ENCODE measurements at regions of chr17 and their contacts with region 1.

Region 1: GRCh38 chr17:42067351-42068091 is 17.1 kb upstream of the C17orf113 start:
- DNase-seq: peak in 1 of 2 experiments; percentile 96
- H3K4me3 ChIP-seq: no peak overlapping the region
- H3K27ac ChIP-seq: no peak overlapping the region
- H3K4me1 ChIP-seq: peaks cover 0 to 12% (median 5%) of the 10 kb centered on the region in 4 experiments; a peak in 6 of 7 replicates
- H3K27me3 ChIP-seq: no peaks in the 10 kb centered on the region; a peak in 2 of 7 replicates
- CTCF ChIP-seq: peak; percentile 79 to 98 (median 84)
- EP300 ChIP-seq: no peak
- POLR2A ChIP-seq: no peak
- RAD21 ChIP-seq: peak; percentile 60 to 62

Region 2: GRCh38 chr17:41973436-41973835 is 94.1 kb before region 1 on chr17:
- CTCF ChIA-PET with region 1: no interaction called
- POLR2A ChIA-PET with region 1: no interaction called
- DNase-seq: no peak
- H3K4me3 ChIP-seq: no peak overlapping the region
- H3K27ac ChIP-seq: no peak overlapping the region
- H3K4me1 ChIP-seq: no peaks in the 10 kb centered on the region
- H3K27me3 ChIP-seq: no peaks in the 10 kb centered on the region
- CTCF ChIP-seq: no peak
- EP300 ChIP-seq: no peak
- POLR2A ChIP-seq: 0 out of 3 replicates have a peak, but pooled peaks of 1 of the 2 experiments have one; percentile 7
- RAD21 ChIP-seq: no peak

Region 3: GRCh38 chr17:42034059-42034458 is 33.5 kb before region 1 on chr17:
- CTCF ChIA-PET with region 1: interaction called, 93 read pairs
- POLR2A ChIA-PET with region 1: no interaction called
- DNase-seq: no peak
- H3K4me3 ChIP-seq: no peak overlapping the region
- H3K27ac ChIP-seq: no peak overlapping the region
- H3K4me1 ChIP-seq: peaks cover 0 to 6% (median 2%) of the 10 kb centered on the region in 4 experiments; a peak in 1 of 7 replicates
- H3K27me3 ChIP-seq: no peaks in the 10 kb centered on the region
- CTCF ChIP-seq: no peak
- EP300 ChIP-seq: no peak
- POLR2A ChIP-seq: no peak
- RAD21 ChIP-seq: no peak

Region 4: GRCh38 chr17:42050393-42051012 is 17.0 kb before region 1 on chr17 and contains the start of gene C17orf113:
- CTCF ChIA-PET with region 1: interaction called, 114 read pairs
- POLR2A ChIA-PET with region 1: interaction called, 5 read pairs
- DNase-seq: peak in 1 of 2 experiments; percentile 76
- H3K4me3 ChIP-seq: peak within 1 kb of the TSS; percentile 40 to 73 (median 62)
- H3K27ac ChIP-seq: no peak within 1 kb of the TSS
- H3K4me1 ChIP-seq: peaks cover 0 to 23% (median 12%) of the 10 kb centered on the region in 4 experiments; a peak in 6 of 7 replicates
- H3K27me3 ChIP-seq: peaks cover 0 to 4% (median 1%) of the 10 kb centered on the region in 4 experiments; a peak in 3 of 7 replicates
- CTCF ChIP-seq: peak; percentile 26 to 68 (median 64)
- EP300 ChIP-seq: no peak
- POLR2A ChIP-seq: no peak
- RAD21 ChIP-seq: peak; percentile 24 to 53
- total RNA-seq, gene C17orf113: 1.4 TPM in 2 replicates

Region 5: DNA sequence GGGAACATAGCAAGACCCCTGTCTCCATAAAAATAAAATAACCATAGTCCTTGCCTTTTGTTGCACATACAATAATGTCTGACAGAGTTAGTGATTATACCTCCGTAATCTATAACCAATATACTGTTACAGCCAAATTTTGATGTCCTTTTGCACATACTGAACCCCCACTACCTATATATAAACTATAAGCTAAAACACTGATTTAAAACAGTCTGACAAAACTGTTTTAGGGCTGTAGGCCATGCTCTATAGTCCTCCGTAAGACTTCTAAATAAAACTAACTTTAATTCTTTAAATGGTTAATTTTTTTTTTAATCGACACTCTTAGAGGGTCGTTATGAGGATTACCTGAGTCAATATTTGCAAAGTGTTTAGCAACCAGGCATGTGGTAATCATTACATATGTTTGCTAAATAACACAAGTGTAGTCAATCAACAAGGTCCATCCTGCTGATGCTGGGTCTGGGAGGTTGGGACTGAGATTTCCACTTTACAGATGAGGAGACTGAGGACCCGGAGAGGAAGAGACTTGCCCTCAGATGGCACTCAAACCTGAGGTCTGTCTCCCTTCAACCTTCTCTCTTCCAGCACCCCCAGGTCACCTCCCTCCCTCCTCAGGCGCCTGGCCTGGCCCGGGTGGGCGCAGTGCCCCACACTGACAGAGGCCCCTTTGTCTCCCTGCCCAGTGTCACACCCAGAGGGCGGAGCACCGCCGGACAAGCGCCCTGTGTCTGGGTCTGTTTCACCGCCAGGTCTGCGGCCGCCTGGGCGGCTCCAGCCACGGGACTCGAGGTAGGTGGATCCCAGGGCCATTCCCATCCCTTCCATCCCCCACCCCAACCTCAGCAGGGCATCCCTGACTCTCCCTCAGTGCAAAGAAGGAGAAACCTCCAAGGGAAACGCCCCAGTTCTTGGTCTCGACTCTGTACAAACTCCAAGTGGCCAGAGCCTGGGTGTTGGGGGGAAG is 20.5 kb after region 1 on chr17:
- CTCF ChIA-PET with region 1: interaction called, 150 read pairs
- POLR2A ChIA-PET with region 1: no interaction called
- DNase-seq: no peak
- H3K4me3 ChIP-seq: no peak overlapping the region
- H3K27ac ChIP-seq: no peak overlapping the region
- H3K4me1 ChIP-seq: peaks cover 0 to 2% (median 0%) of the 10 kb centered on the region in 4 experiments; a peak in 1 of 7 replicates
- H3K27me3 ChIP-seq: no peaks in the 10 kb centered on the region
- CTCF ChIP-seq: no peak
- EP300 ChIP-seq: no peak
- POLR2A ChIP-seq: no peak
- RAD21 ChIP-seq: no peak

Region 6: GRCh38 chr17:42120770-42121769 is 53.5 kb after region 1 on chr17 and contains the start of gene KAT2A:
- CTCF ChIA-PET with region 1: interaction called, 381 read pairs
- POLR2A ChIA-PET with region 1: interaction called, 5 read pairs
- DNase-seq: peak; percentile 43 to 86
- H3K4me3 ChIP-seq: peak within 1 kb of the TSS; percentile 38 to 84 (median 60)
- H3K27ac ChIP-seq: no peak within 1 kb of the TSS; the same call in 1 of the 2 replicates
- H3K4me1 ChIP-seq: peaks cover 0 to 17% (median 13%) of the 10 kb centered on the region in 4 experiments; a peak in 6 of 7 replicates
- H3K27me3 ChIP-seq: no peaks in the 10 kb centered on the region; a peak in 2 of 7 replicates
- CTCF ChIP-seq: no peak
- EP300 ChIP-seq: no peak
- POLR2A ChIP-seq: peak in 1 of 2 experiments; percentile 81; a peak in 2 of 3 replicates
- RAD21 ChIP-seq: no peak
- total RNA-seq, gene KAT2A: 32.5 and 34.2 TPM in 2 replicates

Region 7: GRCh38 chr17:42146911-42147607 is 79.5 kb after region 1 on chr17:
- CTCF ChIA-PET with region 1: no interaction called
- POLR2A ChIA-PET with region 1: no interaction called
- DNase-seq: no peak
- H3K4me3 ChIP-seq: no peak overlapping the region
- H3K27ac ChIP-seq: no peak overlapping the region
- H3K4me1 ChIP-seq: 0 out of 7 replicates have a peak, but pooled peaks cover 0 to 2% (median 0%) of the 10 kb centered on the region in 4 experiments
- H3K27me3 ChIP-seq: no peaks in the 10 kb centered on the region
- CTCF ChIP-seq: no peak
- EP300 ChIP-seq: no peak
- POLR2A ChIP-seq: no peak
- RAD21 ChIP-seq: no peak

Measured in H1 (cell line).